ENCODE measurements at regions of chr4 and their contacts with region 1.

Region 1: DNA sequence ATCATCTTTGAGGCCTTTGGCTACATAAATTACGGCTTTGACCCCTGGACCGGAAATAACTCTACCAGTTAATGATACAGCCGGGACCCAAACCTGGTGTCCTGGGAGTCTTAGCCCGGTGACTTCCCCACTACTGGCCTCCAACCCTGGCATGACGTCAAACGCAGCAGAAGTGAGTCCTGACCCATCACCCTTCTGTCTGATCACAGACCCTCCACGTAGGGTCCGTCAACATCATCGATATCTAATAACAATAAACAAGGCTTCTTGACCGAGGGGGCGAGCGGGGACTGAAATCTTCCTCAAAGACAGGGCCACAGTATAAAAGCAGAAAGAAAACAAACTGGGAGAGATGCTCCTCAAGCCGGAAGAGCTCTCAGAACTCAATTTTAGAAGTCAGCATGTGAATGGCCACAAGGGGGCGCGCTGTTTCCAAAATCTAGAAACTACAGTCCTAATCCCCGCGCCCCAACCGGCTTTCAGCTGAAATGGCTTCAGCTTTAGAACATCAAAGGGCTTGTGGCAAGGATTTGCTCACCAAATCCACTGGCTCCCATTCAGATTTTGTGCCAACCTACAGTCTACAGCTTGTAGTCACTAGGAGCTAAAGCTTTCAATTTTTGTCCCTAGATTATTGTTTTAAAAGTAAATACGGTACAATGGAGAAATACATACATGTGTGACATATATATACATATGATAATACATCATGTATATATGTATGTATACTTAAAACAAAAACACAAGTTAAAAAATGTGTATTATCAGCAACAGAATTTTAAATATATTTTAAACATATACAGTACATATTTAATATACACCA is 46.4 kb upstream of the ENPP6 start:
- DNase-seq: peak; percentile 86
- H3K4me3 Mint-ChIP-seq: peak overlapping the region; percentile 1
- H3K27ac Mint-ChIP-seq: peak overlapping the region; percentile 60
- H3K4me1 Mint-ChIP-seq: peaks cover 59% of the 10 kb centered on the region
- H3K27me3 Mint-ChIP-seq: peaks cover 2% of the 10 kb centered on the region

Region 2: DNA sequence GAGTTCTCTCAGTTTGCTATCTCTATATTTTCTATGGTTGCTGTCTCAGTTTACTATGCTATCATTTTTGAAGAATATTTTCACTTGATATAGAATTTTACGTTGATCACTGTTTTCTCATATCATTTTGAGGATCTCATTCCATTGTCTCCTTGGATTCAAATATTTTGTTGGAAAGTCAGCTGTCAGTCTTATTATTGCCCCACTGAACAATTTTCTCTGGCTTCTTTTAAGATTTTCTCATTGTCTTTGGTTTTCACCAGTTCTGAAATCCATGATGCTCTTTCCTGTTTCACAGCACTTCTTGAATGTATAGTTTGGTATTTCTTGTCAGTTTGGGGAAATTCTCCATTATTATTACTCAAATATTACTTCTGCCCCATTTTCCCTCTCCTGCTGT is 127.6 kb before region 1 on chr4:
- intact Hi-C with region 1: no loop called
- DNase-seq: no peak
- H3K4me3 Mint-ChIP-seq: no peak overlapping the region
- H3K27ac Mint-ChIP-seq: no peak overlapping the region
- H3K4me1 Mint-ChIP-seq: no peaks in the 10 kb centered on the region
- H3K27me3 Mint-ChIP-seq: peaks cover 11% of the 10 kb centered on the region

Region 3: DNA sequence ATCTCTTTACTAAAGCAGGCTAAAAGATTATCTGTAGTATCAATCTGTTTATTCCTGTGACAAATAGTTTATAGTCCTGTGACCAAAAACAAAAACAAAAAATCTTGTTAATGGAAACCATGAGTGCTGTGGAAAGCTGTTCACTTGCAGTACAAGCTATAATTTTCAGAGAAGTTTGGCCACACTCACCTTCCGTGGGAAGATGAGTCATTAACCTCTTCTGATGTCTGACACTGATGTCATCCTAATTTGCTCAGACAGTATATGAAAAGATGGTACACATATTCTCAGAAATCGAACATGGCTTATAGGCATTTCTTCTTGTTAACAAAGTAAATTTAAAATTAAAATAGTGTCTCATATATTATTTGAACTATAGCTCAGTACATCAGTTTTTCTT is 26.5 kb before region 1 on chr4:
- intact Hi-C with region 1: loop called (anchors 1 kb)
- DNase-seq: peak; percentile 62
- H3K4me3 Mint-ChIP-seq: peak overlapping the region; percentile 70
- H3K27ac Mint-ChIP-seq: peak overlapping the region; percentile 97
- H3K4me1 Mint-ChIP-seq: peaks cover 59% of the 10 kb centered on the region
- H3K27me3 Mint-ChIP-seq: no peaks in the 10 kb centered on the region

Region 4: GRCh38 chr4:184287697-184288255 is 23.7 kb after region 1 on chr4:
- intact Hi-C with region 1: loop called (anchors 1 kb)
- DNase-seq: no peak
- H3K4me3 Mint-ChIP-seq: peak overlapping the region; percentile 12
- H3K27ac Mint-ChIP-seq: peak overlapping the region; percentile 13
- H3K4me1 Mint-ChIP-seq: peaks cover 53% of the 10 kb centered on the region
- H3K27me3 Mint-ChIP-seq: no peaks in the 10 kb centered on the region

Region 5: GRCh38 chr4:184408021-184408710 is 144.0 kb after region 1 on chr4:
- intact Hi-C with region 1: loop called (anchors 2 kb)
- DNase-seq: no peak
- H3K4me3 Mint-ChIP-seq: peak overlapping the region; percentile 67
- H3K27ac Mint-ChIP-seq: peak overlapping the region; percentile 88
- H3K4me1 Mint-ChIP-seq: peaks cover 71% of the 10 kb centered on the region
- H3K27me3 Mint-ChIP-seq: no peaks in the 10 kb centered on the region

Region 6: GRCh38 chr4:184474263-184475095 is 210.4 kb after region 1 on chr4 and contains the start of gene IRF2:
- intact Hi-C with region 1: loop called (anchors 1 kb)
- DNase-seq: peak; percentile 94
- H3K4me3 Mint-ChIP-seq: peak within 1 kb of the TSS; percentile 97
- H3K27ac Mint-ChIP-seq: peak within 1 kb of the TSS; percentile 96
- H3K4me1 Mint-ChIP-seq: peaks cover 64% of the 10 kb centered on the region
- H3K27me3 Mint-ChIP-seq: no peaks in the 10 kb centered on the region
- total RNA-seq, gene IRF2: 64.2 and 75.8 TPM in 2 replicates

Region 7: GRCh38 chr4:184575306-184575705 is 311.2 kb after region 1 on chr4:
- intact Hi-C with region 1: loop called (anchors 1 kb)
- DNase-seq: no peak
- H3K4me3 Mint-ChIP-seq: no peak overlapping the region
- H3K27ac Mint-ChIP-seq: peak overlapping the region; percentile 55
- H3K4me1 Mint-ChIP-seq: peaks cover 19% of the 10 kb centered on the region
- H3K27me3 Mint-ChIP-seq: no peaks in the 10 kb centered on the region

Region 8: GRCh38 chr4:184762100-184762499 is 498.0 kb after region 1 on chr4:
- intact Hi-C with region 1: loop called (anchors 1 kb)
- DNase-seq: peak; percentile 59
- H3K4me3 Mint-ChIP-seq: peak overlapping the region; percentile 16
- H3K27ac Mint-ChIP-seq: peak overlapping the region; percentile 85
- H3K4me1 Mint-ChIP-seq: peaks cover 33% of the 10 kb centered on the region
- H3K27me3 Mint-ChIP-seq: no peaks in the 10 kb centered on the region

Measured in activated T-helper 1 cell treated with anti-CD3 and anti-CD28 coated beads, Interleukin-12 subunit alpha, Interleukin-12 subunit beta, Interleukin-2, Interleukin-4 antibody, amounts not matched to agents 30 ng/mL and 10 ng/mL and 1 ng/mL, durations not matched to agents 14 hours and 24 hours and 36 hours (primary cell).